Ovary (tissue), 10 donors: ENCODE measurements at regions of chr17 and their contacts with region 1.

Region 1: DNA sequence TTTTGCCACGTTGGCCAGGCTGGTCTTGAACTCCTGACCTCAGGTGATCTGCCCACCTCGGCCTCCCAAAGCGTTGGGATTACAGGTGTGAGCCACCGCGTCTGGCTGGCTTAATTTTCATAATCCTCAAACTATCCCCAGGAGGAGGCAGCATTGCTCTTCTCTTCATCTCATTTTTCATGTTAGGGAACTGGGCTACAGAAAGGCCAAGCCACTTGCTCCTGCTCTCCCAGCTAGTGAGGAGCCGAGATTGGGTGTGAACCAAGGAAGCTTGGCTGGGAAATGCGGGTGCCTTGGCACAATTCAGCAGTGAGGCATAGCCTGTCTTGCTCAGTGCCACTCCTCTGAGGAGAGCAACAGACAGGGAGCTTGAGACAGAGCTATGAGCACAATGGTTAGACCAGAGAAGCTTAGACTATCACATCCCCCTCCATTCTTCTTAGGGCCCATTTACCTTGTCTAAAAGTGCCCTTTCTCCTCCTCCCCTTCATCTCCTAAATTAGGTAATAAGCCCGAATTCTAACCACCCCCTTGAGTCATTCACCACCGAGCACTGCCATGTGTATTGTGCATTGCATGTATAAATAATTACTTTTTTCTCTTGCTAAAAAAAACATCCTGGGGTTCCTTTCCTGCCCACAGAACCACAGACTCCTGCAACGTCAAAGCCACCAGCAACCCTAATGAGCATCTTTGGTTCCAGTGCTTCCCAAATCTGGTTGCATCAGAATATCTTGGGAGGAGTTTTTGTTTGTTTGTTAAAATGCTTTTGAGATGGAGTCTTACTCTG is 20.0 kb upstream of the KIF19 start:
- DNase-seq: no peak
- H3K4me3 ChIP-seq: no peak overlapping the region
- H3K27ac ChIP-seq: no peak overlapping the region
- H3K4me1 ChIP-seq: no peaks in the 10 kb centered on the region
- H3K27me3 ChIP-seq: no peaks in the 10 kb centered on the region
- CTCF ChIP-seq: no peak
- EP300 ChIP-seq: no peak
- POLR2A ChIP-seq: no peak

Region 2: GRCh38 chr17:74118504-74118903 is 187.6 kb before region 1 on chr17:
- intact Hi-C with region 1: no loop called
- DNase-seq: no peak
- H3K4me3 ChIP-seq: no peak overlapping the region
- H3K27ac ChIP-seq: no peak overlapping the region
- H3K4me1 ChIP-seq: no peaks in the 10 kb centered on the region
- H3K27me3 ChIP-seq: no peaks in the 10 kb centered on the region
- CTCF ChIP-seq: no peak
- EP300 ChIP-seq: no peak
- POLR2A ChIP-seq: no peak

Region 3: GRCh38 chr17:74345433-74346241 is 39.6 kb after region 1 on chr17:
- intact Hi-C with region 1: loop called in 1 of 4 experiments (anchors 5 kb)
- DNase-seq: no peak
- H3K4me3 ChIP-seq: no peak overlapping the region
- H3K27ac ChIP-seq: no peak overlapping the region
- H3K4me1 ChIP-seq: no peaks in the 10 kb centered on the region
- H3K27me3 ChIP-seq: no peaks in the 10 kb centered on the region
- CTCF ChIP-seq: no peak
- EP300 ChIP-seq: no peak
- POLR2A ChIP-seq: no peak